ENCODE measurements at regions of chr12 and their contacts with region 1.

Region 1: GRCh38 chr12:5379744-5380496 is 52.0 kb upstream of the NTF3 start:
- DNase-seq: peak; percentile 93 to 96
- ATAC-seq: peak; percentile 97 to 98
- H3K4me3 ChIP-seq: no peak overlapping the region
- H3K27ac ChIP-seq: peak overlapping the region; percentile 68 to 81 (median 76)
- H3K4me1 ChIP-seq: peaks cover 27 to 33% of the 10 kb centered on the region in 2 donors
- H3K27me3 ChIP-seq: no peaks in the 10 kb centered on the region
- CTCF ChIP-seq: no peak
- POLR2A ChIP-seq: no peak

Region 2: DNA sequence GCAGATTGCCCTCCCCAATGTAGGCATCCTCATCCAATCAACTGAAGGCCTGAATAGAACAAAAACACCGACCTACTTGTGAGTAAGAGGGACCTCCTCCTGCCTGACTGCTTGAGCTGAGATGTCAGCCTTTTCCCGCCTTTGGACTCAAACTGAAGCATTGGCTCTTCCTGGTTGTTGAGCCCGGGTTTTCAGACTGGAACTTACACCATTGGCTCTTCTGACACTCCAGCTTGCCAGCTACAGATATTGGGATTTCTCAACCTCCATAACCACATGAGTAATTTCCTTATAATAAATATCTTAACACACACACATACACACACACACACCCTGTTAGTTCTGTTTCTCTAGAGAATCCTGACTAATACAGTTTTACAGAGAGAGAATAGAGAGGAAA is 121.4 kb before region 1 on chr12:
- in situ Hi-C with region 1: no loop called
- intact Hi-C with region 1: loop called (anchors 10 kb)
- DNase-seq: no peak
- ATAC-seq: no peak
- H3K4me3 ChIP-seq: no peak overlapping the region
- H3K27ac ChIP-seq: no peak overlapping the region
- H3K4me1 ChIP-seq: peaks cover 3 to 10% of the 10 kb centered on the region in 2 donors
- H3K27me3 ChIP-seq: no peaks in the 10 kb centered on the region
- CTCF ChIP-seq: no peak
- POLR2A ChIP-seq: no peak

Region 3: DNA sequence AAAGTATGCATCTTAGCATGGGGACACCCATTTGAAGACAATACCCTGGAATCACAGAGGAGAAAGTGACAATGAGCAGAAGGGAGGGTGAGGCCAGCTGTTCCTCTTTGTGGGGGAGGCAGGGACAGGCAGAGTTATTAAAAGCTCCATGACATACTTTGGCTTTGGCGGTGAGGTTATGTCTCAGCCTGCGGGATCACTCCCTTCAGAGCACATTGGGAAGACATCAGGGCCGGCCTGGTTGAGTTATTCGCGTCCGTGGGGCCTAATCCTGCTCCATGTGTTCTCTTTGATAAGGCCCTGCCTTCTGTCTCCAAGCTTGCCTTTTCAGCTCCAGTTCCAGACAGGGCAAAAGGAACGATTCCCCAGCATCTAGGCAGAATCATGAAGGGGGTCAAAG is 46.8 kb before region 1 on chr12:
- in situ Hi-C with region 1: no loop called
- intact Hi-C with region 1: loop called (anchors 5 kb)
- DNase-seq: peak; percentile 27 to 59
- ATAC-seq: peak; percentile 98
- H3K4me3 ChIP-seq: no peak overlapping the region
- H3K27ac ChIP-seq: peak overlapping the region; percentile 45 to 77 (median 74)
- H3K4me1 ChIP-seq: peaks cover 7 to 23% of the 10 kb centered on the region in 2 donors
- H3K27me3 ChIP-seq: no peaks in the 10 kb centered on the region
- CTCF ChIP-seq: no peak
- POLR2A ChIP-seq: no peak

Region 4: DNA sequence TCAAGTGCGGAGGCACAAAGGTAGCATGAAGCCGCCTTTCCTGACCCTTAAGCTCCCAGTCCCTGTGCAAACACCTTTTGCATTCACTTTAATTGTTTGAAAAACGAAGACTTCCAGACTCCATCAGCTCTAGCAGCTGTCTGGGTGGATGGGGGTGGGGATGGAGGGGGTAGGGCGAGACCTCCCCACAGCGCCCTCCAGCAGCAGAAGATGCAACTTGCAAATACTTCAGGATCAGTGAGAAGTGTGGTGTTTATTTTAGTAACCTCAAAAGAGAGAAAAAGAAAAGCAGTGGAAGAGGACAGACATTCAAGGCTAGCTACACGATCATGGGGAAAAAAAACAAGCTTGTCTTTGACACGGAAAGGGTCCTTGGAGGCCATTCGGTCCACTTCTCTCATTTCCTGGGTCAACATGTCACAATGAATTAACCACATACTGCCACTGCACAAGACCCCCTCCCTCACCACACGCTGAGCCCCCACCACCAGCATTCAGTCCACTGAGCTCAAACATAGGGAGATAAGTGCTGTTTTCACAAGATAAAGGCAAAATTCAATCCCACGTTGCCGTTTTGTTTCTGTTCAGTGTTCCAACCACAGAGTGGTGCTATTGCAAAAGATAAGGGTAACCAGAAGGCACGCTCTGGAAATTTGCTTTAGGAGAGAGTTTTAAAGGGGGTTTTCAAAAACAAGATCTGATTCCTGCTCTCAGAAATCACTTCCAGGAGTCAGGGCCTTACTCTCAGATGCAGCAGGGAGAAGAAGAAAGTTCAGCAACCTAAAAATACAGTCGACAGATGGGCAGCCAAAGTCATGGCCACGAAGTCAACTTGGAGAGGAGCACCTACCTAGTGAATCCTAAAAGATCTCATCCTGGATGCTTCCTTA is 48.7 kb after region 1 on chr12:
- in situ Hi-C with region 1: no loop called
- intact Hi-C with region 1: loop called (anchors 5 kb)
- DNase-seq: no peak
- ATAC-seq: no peak
- H3K4me3 ChIP-seq: no peak overlapping the region
- H3K27ac ChIP-seq: no peak overlapping the region
- H3K4me1 ChIP-seq: peaks cover 22 to 40% of the 10 kb centered on the region in 2 donors
- H3K27me3 ChIP-seq: peaks cover 2 to 34% (median 21%) of the 10 kb centered on the region in 3 donors
- CTCF ChIP-seq: peak in 4 of 5 experiments; percentile 19 to 47 (median 33)
- POLR2A ChIP-seq: no peak